PC-9 (cell line): ENCODE measurements at regions of chrX and their contacts with region 1.

Region 1: DNA sequence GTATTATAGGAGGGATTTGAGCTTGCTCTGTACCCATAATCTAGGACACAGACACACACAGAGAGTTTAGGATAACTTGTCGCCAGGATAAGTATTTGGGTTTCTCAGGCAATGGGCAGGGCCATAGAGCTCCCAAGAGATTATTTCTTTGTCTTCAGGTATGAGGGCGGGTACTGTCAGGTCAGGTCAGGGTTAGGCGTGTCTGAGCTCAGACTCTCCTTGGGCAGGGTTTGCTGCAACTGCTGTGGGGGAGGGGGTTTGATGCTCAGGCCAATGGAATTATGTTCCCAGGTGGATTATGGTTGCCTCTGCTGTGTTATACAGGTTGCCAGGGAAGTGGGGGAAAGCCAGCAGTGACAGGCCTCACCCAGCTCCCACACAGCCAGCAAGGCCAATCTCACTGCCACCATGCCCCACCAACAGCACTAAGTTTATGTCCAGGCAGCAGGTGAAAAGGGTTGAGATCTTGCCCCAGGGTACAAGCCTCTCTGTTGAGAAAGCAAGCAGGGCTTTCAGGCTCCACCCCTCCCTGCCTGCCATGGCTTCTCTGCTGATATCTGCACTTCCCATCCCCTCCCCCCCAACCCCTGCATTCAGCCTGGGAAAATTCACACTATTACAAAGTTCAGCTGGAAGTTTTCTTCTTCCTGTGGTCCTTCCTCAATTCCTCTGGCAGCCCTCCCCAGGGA is 101.3 kb downstream of the RRAGB start:
- DNase-seq: peak; percentile 43 to 57
- H3K4me3 ChIP-seq: no peak overlapping the region
- H3K27ac ChIP-seq: peak overlapping the region; percentile 51; the same call in 1 of the 2 replicates
- H3K4me1 ChIP-seq: peaks cover 26% of the 10 kb centered on the region
- H3K27me3 ChIP-seq: no peaks in the 10 kb centered on the region
- CTCF ChIP-seq: no peak

Region 2: DNA sequence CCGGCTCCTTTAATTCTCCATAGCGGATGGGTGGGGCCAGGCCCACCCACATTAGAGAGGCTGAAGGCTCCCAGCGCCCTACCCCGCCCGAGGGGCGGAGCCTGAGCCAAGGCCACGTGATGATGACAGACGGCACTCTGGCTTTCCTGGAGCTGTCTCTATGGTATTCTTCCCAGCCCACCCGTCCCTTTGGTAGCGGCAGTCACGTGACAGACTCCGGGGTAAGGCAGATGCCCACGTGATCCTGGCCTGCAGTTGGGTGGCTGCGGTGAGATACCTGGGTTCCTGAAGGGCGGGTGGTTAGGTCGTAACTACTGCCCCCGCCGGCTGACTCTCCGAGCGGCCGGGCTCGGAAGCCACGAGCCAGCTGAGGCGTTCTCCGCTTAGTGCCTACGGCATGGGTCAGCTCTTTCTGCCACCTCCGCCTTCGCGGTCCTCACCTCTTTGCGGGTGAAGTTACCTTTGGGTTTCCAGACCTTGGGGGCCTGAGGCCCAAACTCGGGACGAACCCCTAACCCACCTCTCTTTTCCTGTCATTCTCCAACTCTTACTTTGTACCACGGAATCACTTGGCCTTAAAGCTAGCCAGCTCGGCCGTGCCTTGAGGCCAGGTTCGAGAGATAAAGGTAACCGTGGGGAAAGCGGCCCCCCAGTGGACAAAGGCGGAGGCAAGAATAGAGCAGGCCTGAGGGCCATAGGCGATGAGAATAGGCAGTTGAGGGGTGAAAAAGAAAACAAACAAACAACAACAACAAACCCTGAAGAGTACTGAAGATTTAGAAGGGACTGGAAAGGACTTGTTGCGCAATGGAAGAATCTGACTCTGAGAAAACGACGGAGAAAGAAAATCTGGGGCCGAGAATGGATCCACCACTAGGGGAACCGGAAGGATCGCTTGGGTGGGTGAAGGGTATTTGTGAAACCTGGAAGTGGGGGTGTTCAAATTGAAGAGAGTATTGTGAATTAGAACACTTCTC is 101.0 kb before region 1 on chrX and contains the start of gene RRAGB:
- CTCF ChIA-PET with region 1: interaction called, 11 read pairs
- POLR2A ChIA-PET with region 1: no interaction called
- intact Hi-C with region 1: no loop called
- DNase-seq: peak; percentile 89 to 96
- H3K4me3 ChIP-seq: peak within 1 kb of the TSS; percentile 91
- H3K27ac ChIP-seq: peak within 1 kb of the TSS; percentile 86
- H3K4me1 ChIP-seq: peaks cover 11% of the 10 kb centered on the region; the same call in 1 of the 2 replicates
- H3K27me3 ChIP-seq: no peaks in the 10 kb centered on the region
- CTCF ChIP-seq: peak; percentile 69
- total RNA-seq, gene RRAGB: 18.6 and 23.3 TPM in 2 replicates

Region 3: GRCh38 chrX:56025872-56026571 is 207.2 kb after region 1 on chrX:
- CTCF ChIA-PET with region 1: no interaction called
- POLR2A ChIA-PET with region 1: no interaction called
- intact Hi-C with region 1: loop called (anchors 10 kb)
- DNase-seq: peak in 1 of 2 experiments; percentile 54
- H3K4me3 ChIP-seq: no peak overlapping the region
- H3K27ac ChIP-seq: no peak overlapping the region
- H3K4me1 ChIP-seq: peaks cover 29% of the 10 kb centered on the region
- H3K27me3 ChIP-seq: no peaks in the 10 kb centered on the region
- CTCF ChIP-seq: no peak